BJ (cell line): ENCODE measurements at regions of chr22 and their contacts with region 1.

Region 1: DNA sequence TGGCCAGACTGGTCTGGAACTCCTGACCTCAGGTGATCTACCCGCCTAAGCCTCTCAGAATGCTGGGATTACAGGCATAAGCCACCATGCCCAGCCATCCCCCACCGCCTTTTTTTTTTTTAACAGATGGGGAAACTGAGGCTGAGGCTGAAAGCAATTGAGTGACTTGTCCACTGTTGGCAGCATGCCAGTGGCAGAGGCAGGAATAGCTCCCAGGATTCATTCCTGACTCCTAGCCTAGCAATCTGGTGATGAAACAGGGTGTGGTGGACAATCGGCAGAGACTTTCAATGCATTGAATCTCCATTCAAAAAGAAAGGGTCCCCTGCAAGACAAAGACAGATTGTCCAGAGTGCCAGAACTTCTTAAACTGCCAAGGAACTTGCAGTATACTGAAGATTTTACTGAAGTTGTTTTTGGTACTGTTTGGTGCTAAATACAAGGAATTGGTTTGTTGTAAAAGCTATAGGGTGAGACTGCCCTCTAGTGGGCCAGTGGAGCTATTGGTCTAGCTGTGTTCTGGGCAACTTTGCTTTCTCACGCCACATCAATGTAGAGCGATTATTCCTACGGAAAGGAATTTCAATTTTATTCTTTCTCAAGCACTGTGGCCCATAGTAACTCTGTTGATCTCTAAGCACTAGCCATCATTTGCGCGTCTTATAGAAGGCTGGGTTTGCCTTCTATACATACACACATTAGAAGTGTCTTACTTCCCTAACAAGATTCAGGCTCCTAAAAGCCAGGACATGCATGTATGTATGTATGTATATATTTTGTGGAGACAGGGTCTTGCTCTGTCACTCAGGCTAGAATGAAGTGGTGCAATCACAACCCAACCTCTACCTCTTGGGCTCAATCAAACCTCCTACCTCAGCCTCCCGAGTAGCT is 21.0 kb downstream of the C22orf31 start:
- DNase-seq: peak; percentile 46
- H3K4me3 ChIP-seq: no peak overlapping the region
- H3K27me3 ChIP-seq: no peaks in the 10 kb centered on the region
- CTCF ChIP-seq: peak; percentile 96

Region 2: DNA sequence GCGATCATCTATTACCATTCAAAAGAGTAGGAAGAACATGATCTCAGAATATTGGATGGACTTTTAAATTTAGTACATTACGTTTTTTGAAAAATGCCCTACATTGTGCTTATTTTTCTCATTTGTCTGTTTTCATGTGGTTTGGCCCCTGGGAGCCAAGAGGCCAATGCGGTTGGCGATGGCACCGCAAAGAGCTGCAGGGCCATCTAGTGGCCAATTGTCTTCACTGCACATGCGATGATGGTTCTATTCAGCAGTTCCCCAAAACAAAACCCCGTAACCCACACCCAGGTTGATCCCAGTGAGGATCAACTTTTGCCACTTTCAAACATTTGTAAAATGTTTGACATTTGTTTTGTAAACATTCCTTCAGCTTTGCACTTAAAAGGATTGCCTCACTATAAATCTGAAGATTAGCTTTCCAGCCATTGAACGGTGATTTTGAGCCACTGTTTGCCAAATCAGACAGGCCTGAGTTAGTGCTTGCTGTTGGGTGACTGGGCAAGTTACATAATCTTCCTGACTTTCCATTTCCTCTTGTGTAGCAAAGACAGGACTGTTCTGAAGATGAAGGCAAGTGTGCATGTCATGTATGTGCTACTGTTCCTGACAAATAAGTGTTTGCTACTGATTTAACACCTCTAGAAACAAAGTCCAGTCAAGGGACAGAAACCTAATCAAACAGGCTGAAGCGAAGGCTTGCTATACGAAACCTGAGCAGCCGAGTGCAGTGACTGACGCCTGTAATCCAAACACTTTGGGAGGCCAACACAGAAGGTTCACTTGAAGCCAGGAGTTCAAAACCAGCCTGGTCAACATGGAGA is 211.1 kb before region 1 on chr22:
- CTCF ChIA-PET with region 1: interaction called, 26 read pairs
- POLR2A ChIA-PET with region 1: no interaction called
- DNase-seq: no peak
- H3K4me3 ChIP-seq: no peak overlapping the region
- H3K27me3 ChIP-seq: no peaks in the 10 kb centered on the region
- CTCF ChIP-seq: peak; percentile 92

Region 3: GRCh38 chr22:28843633-28844032 is 197.0 kb before region 1 on chr22:
- CTCF ChIA-PET with region 1: interaction called, 12 read pairs
- POLR2A ChIA-PET with region 1: no interaction called
- DNase-seq: no peak
- H3K4me3 ChIP-seq: no peak overlapping the region
- H3K27me3 ChIP-seq: no peaks in the 10 kb centered on the region
- CTCF ChIP-seq: no peak

Region 4: GRCh38 chr22:28855355-28856094 is 185.1 kb before region 1 on chr22:
- CTCF ChIA-PET with region 1: interaction called, 86 read pairs
- POLR2A ChIA-PET with region 1: no interaction called
- DNase-seq: peak; percentile 22
- H3K4me3 ChIP-seq: no peak overlapping the region
- H3K27me3 ChIP-seq: peaks cover 2% of the 10 kb centered on the region; the same call in 1 of the 2 replicates
- CTCF ChIP-seq: peak; percentile 84

Region 5: GRCh38 chr22:28864878-28865596 is 175.6 kb before region 1 on chr22:
- CTCF ChIA-PET with region 1: interaction called, 13 read pairs
- POLR2A ChIA-PET with region 1: no interaction called
- DNase-seq: no peak
- H3K4me3 ChIP-seq: no peak overlapping the region
- H3K27me3 ChIP-seq: no peaks in the 10 kb centered on the region; the same call in 1 of the 2 replicates
- CTCF ChIP-seq: no peak

Region 6: DNA sequence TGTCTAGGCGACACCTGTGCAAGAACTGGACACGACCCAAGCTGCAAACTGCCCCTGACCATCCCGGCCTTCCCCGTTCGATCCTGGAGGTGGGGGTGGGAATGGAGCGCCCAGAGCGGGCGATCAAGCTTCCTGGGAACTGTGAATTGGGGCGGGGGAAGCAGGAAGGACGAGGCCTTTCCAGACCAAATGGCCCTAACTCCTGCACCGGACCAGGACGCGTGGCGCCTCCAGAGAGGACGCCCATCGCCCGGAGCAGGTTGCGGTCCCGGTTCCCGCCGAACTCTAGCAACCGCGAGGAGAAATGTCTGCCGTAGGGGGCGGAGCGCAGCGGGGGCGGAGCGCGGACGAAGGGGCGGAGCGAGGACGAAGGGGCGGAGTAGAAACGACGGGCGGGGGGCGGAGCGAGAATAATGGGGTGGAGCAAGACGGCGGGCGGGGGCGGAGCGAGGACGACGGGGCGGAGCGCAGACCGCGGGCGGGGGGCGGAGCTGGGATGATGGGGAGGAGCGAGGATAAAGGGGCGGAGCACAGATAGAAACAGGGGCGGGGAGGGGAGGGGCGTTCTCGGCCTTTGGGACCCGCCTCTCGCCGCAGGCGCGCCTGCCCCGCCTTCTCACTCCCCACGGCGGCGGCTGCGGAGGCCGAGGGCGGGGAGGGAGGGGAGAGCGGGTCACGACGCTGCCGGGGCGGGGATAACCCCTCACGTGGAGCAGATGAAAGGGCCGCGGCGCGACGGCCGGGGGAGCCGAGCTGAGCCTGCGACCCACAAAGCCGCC is 157.6 kb before region 1 on chr22 and contains the start of gene ZNRF3:
- CTCF ChIA-PET with region 1: interaction called, 10 read pairs
- POLR2A ChIA-PET with region 1: no interaction called
- DNase-seq: peak; percentile 15
- H3K4me3 ChIP-seq: peak within 1 kb of the TSS; percentile 60
- H3K27me3 ChIP-seq: no peaks in the 10 kb centered on the region
- CTCF ChIP-seq: peak; percentile 7; the same call in 1 of the 2 replicates
- polyA plus RNA-seq, gene ZNRF3: 0.75 and 1.1 TPM in 2 replicates

Region 7: GRCh38 chr22:29122041-29122440 is 81.4 kb after region 1 on chr22:
- CTCF ChIA-PET with region 1: no interaction called
- POLR2A ChIA-PET with region 1: no interaction called
- DNase-seq: no peak
- H3K4me3 ChIP-seq: no peak overlapping the region
- H3K27me3 ChIP-seq: no peaks in the 10 kb centered on the region
- CTCF ChIP-seq: no peak

Region 8: GRCh38 chr22:29154364-29155048 is 113.9 kb after region 1 on chr22:
- CTCF ChIA-PET with region 1: interaction called, 24 read pairs
- POLR2A ChIA-PET with region 1: no interaction called
- DNase-seq: no peak
- H3K4me3 ChIP-seq: no peak overlapping the region
- H3K27me3 ChIP-seq: peaks cover 5% of the 10 kb centered on the region; the same call in 1 of the 2 replicates
- CTCF ChIP-seq: peak; percentile 96